ENCODE measurements at regions of chr5 and their contacts with region 1.

Region 1: GRCh38 chr5:159262859-159263567 is at the start of gene UBLCP1:
- DNase-seq: peak; percentile 78
- ATAC-seq: peak; percentile 90
- H3K4me3 ChIP-seq: peak within 1 kb of the TSS; percentile 93 to 98
- H3K27ac ChIP-seq: peak within 1 kb of the TSS; percentile 79
- H3K4me1 ChIP-seq: peaks cover 0 to 17% of the 10 kb centered on the region in 2 experiments; a peak in 3 of 4 replicates
- H3K27me3 ChIP-seq: no peaks in the 10 kb centered on the region
- CTCF ChIP-seq: no peak
- POLR2A ChIP-seq: peak; percentile 89
- RAD21 ChIP-seq: no peak
- total RNA-seq, gene UBLCP1: 32.9 TPM

Region 2: GRCh38 chr5:159178978-159179377 is 84.0 kb before region 1 on chr5:
- CTCF ChIA-PET with region 1: no interaction called
- POLR2A ChIA-PET with region 1: no interaction called
- RAD21 ChIA-PET with region 1: no interaction called
- intact Hi-C with region 1: loop called (anchors 5 kb)
- DNase-seq: peak; percentile 75
- ATAC-seq: peak; percentile 79
- H3K4me3 ChIP-seq: no peak overlapping the region
- H3K27ac ChIP-seq: no peak overlapping the region
- H3K4me1 ChIP-seq: peaks cover 0 to 18% of the 10 kb centered on the region in 2 experiments; a peak in 2 of 4 replicates
- H3K27me3 ChIP-seq: no peaks in the 10 kb centered on the region
- CTCF ChIP-seq: no peak
- POLR2A ChIP-seq: no peak
- RAD21 ChIP-seq: 0 out of 2 replicates have a peak, but pooled peaks have one; percentile 9

Region 3: DNA sequence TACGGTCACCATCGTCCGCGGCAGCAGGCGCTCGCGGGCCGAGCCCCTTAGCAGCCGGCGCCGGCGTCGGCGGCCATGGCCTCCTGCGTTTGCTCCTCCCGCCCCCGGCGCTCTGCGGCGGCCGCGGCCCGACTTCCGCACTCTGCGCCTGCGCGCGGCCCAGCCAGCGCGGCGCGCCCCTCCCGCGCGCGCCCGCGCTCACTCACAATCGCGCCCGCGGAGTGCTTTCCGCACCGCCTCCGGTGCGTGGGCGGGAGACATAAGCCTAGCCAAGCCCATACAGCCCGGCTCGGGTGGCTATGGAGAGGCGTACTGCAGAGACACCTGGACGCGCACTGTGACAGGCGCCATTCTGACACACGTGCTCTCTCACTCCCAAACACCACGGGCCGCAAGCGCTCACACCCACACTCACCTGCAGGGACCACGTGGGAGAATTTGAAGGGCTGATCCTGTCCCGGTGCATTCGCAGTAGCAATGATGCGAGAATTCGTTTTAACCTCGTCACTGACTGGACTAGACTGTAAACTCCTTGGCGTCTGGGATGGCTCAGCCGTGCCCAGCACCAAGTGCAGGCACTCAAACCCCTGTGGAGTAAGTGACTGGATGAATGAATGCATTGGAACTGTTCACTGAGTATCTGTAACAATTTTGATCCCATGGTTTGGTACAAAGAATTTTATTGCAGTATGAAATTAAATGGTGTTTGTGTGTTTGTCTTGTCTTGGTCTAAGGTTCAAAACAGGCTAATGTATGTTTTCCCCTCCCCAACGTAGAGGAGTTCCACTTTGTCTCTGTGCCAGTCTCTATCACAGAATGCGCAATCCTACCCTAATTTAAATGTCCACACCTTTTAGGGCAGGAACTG is 53.3 kb before region 1 on chr5 and contains the start of gene RNF145:
- CTCF ChIA-PET with region 1: no interaction called
- POLR2A ChIA-PET with region 1: no interaction called
- RAD21 ChIA-PET with region 1: no interaction called
- intact Hi-C with region 1: loop called (anchors 2 kb)
- DNase-seq: peak; percentile 68
- ATAC-seq: peak; percentile 78
- H3K4me3 ChIP-seq: peak within 1 kb of the TSS; percentile 89
- H3K27ac ChIP-seq: peak within 1 kb of the TSS; percentile 75
- H3K4me1 ChIP-seq: peaks cover 14 to 35% of the 10 kb centered on the region in 2 experiments; a peak in 3 of 4 replicates
- H3K27me3 ChIP-seq: no peaks in the 10 kb centered on the region
- CTCF ChIP-seq: no peak
- POLR2A ChIP-seq: peak; percentile 50
- RAD21 ChIP-seq: no peak
- total RNA-seq, gene RNF145: 60.6 TPM

Region 4: DNA sequence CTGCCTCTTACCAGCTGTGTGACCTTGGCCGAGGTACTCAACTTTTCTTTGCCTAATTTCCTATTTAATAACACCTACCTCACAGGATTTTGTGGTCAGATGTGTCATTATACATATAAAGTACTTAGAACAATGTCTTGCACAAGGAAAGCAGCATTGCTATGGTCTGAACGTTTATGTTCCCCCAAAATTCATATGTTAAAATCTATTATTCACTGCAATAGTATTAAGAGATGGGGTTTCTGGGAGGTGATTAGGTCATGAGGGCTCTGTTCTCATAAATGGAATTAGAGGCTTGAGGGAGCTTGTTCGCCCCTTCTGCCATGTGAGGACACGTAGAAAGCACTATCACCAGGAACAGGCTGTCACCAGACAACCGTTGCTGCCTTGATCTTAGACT is 42.8 kb before region 1 on chr5:
- CTCF ChIA-PET with region 1: no interaction called
- POLR2A ChIA-PET with region 1: no interaction called
- RAD21 ChIA-PET with region 1: no interaction called
- intact Hi-C with region 1: no loop called
- DNase-seq: no peak
- ATAC-seq: no peak
- H3K4me3 ChIP-seq: no peak overlapping the region
- H3K27ac ChIP-seq: no peak overlapping the region
- H3K4me1 ChIP-seq: peaks cover 3 to 6% of the 10 kb centered on the region in 2 experiments; a peak in 3 of 4 replicates
- H3K27me3 ChIP-seq: no peaks in the 10 kb centered on the region
- CTCF ChIP-seq: no peak
- POLR2A ChIP-seq: no peak
- RAD21 ChIP-seq: no peak

Region 5: DNA sequence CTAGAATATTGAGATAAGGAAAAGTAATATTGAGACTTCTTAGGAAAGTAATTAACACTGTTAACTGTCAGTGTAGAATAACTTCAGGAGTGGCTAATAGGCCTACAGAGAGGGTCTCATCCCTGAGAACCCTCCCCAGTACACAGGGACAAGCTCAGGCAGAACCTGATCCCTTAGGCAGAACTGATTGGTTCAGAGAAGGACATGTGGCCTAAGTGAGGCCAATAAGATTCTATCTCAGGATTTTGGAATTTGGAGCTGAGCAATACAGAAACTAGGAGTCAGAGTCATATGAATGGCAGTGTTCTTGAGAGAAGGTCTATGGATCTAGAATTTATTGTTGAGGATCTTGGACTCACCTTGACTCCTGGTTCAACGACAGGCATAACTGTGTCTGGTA is 10.8 kb before region 1 on chr5:
- CTCF ChIA-PET with region 1: no interaction called
- POLR2A ChIA-PET with region 1: no interaction called
- RAD21 ChIA-PET with region 1: no interaction called
- intact Hi-C with region 1: no loop called
- DNase-seq: no peak
- ATAC-seq: peak; percentile 54; the same call in 1 of the 2 replicates
- H3K4me3 ChIP-seq: no peak overlapping the region
- H3K27ac ChIP-seq: no peak overlapping the region
- H3K4me1 ChIP-seq: no peaks in the 10 kb centered on the region
- H3K27me3 ChIP-seq: no peaks in the 10 kb centered on the region
- CTCF ChIP-seq: no peak
- POLR2A ChIP-seq: no peak
- RAD21 ChIP-seq: no peak